ENCODE measurements at regions of chr10 and their contacts with region 1.

Region 1: DNA sequence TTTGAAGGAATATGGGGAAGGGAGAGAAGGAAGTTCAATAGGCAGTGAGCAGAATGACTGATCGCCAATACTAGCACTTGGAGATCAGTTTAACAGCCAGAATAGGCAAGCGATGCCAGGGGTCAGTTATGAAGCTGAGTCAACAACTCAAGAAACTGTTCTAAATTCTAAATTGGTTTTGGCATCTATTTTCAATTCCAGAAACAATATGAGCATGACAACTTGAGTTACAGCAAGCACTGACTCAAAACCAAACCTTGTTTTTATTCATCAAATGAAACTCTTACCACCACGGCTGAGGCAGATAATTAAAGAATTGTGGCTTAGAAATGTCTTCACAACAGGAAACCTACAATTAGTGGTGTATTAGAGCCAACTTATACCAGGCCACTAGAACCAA is 180.5 kb upstream of the ASAH2 start:
- DNase-seq: peak; percentile 57
- H3K4me3 Mint-ChIP-seq: peak overlapping the region; percentile 11
- H3K27ac Mint-ChIP-seq: peak overlapping the region; percentile 14
- H3K4me1 Mint-ChIP-seq: peaks cover 22% of the 10 kb centered on the region
- H3K27me3 Mint-ChIP-seq: no peaks in the 10 kb centered on the region

Region 2: GRCh38 chr10:49187950-49188761 is 1243.6 kb before region 1 on chr10 and contains the start of gene TMEM273:
- intact Hi-C with region 1: loop called (anchors 5 kb)
- DNase-seq: peak; percentile 77
- H3K4me3 Mint-ChIP-seq: peak within 1 kb of the TSS; percentile 83
- H3K27ac Mint-ChIP-seq: peak within 1 kb of the TSS; percentile 77
- H3K4me1 Mint-ChIP-seq: peaks cover 50% of the 10 kb centered on the region
- H3K27me3 Mint-ChIP-seq: peaks cover 6% of the 10 kb centered on the region
- total RNA-seq, gene TMEM273: 34.3 and 36.4 TPM in 2 replicates

Region 3: DNA sequence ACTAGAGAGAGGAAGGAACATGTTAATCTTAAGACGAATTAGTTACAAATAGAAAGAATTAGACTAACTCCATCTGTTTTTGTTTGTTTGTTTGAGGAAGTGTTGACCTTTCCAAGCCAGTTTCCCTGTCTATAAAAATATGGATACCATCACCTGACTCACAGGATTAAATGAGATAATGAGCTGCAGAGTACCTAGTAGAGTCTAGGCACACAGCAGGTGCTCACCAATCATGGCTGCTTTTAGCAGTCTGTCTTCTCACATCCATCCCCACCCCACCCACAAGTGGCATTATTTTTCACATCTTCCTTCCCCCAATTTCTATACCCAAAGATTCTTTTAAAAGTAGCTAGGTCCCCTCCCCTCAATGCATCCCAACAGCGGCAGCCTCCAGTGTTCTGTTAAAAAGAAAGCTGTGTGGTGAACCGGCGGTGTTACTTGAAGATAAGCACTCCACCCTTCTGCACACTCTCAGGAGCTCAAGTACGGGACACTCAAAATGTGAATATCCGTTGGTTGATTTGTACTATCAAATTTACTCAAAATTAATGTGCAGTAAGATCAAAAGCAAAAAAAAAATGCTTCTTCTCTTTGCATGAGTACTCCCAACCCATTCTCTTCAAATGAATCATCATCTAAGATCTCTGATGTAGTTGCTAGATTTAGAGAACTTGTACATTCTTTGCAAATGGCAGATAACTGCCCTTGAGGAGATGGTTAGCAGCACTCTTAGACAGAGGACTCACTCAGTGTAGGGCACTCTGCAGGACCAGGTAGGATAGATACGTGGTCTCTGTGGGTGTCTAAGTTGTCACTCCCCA is 35.1 kb before region 1 on chr10:
- intact Hi-C with region 1: loop called (anchors 2 kb)
- DNase-seq: peak; percentile 64
- H3K4me3 Mint-ChIP-seq: peak overlapping the region; percentile 68
- H3K27ac Mint-ChIP-seq: peak overlapping the region; percentile 87
- H3K4me1 Mint-ChIP-seq: peaks cover 31% of the 10 kb centered on the region
- H3K27me3 Mint-ChIP-seq: no peaks in the 10 kb centered on the region

Region 4: DNA sequence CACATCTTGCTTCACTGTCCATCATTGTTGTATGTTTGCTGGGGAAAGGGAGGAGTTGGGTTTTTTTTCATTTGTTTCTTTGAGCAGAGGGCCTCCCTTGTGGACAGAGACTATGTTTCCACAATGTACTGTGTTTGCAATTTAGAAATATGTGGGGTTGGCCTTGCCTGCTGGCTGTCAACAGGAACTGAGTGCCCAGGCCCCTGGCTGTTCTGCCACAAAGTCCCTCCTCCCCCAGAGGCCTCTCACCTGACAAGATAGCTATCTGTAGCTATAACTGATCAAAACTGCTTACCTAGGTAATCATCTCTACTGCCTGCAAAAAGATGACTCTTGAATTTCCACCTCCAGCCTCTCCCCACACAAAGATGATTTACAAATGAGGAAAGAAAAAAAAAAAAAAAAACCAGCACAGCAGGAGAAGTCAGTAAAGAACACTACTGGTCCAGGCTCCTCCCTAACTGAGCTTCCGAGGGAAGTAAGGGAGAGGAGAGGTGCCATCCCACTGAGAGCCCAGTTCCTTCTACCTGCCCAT is 70.2 kb after region 1 on chr10:
- intact Hi-C with region 1: loop called (anchors 1 kb)
- DNase-seq: no peak
- H3K4me3 Mint-ChIP-seq: peak overlapping the region; percentile 35
- H3K27ac Mint-ChIP-seq: peak overlapping the region; percentile 80
- H3K4me1 Mint-ChIP-seq: peaks cover 51% of the 10 kb centered on the region
- H3K27me3 Mint-ChIP-seq: no peaks in the 10 kb centered on the region

Region 5: GRCh38 chr10:50636618-50637579 is 205.1 kb after region 1 on chr10:
- intact Hi-C with region 1: loop called (anchors 1 kb)
- DNase-seq: peak; percentile 83
- H3K4me3 Mint-ChIP-seq: peak overlapping the region; percentile 65
- H3K27ac Mint-ChIP-seq: peak overlapping the region; percentile 73
- H3K4me1 Mint-ChIP-seq: peaks cover 30% of the 10 kb centered on the region
- H3K27me3 Mint-ChIP-seq: peaks cover 60% of the 10 kb centered on the region